HepG2 (cell line): ENCODE measurements at regions of chr9 and their contacts with region 1.

Region 1: GRCh38 chr9:107282753-107283625 is at the start of gene RAD23B:
- DNase-seq: peak; percentile 94
- ATAC-seq: peak; percentile 93
- H3K4me3 ChIP-seq: peak within 1 kb of the TSS; percentile 82 to 94 (median 87)
- H3K27ac ChIP-seq: peak within 1 kb of the TSS; percentile 98
- H3K4me1 ChIP-seq: peaks cover 40% of the 10 kb centered on the region
- H3K27me3 ChIP-seq: no peaks in the 10 kb centered on the region; a peak in 1 of 5 replicates
- CTCF ChIP-seq: 0 out of 2 replicates have a peak, but pooled peaks have one; percentile 9
- EP300 ChIP-seq: peak in 1 of 2 experiments; percentile 13; a peak in 2 of 4 replicates
- POLR2A ChIP-seq: peak; percentile 87 to 89
- RAD21 ChIP-seq: peak; percentile 62; the same call in 1 of the 2 replicates
- total RNA-seq, gene RAD23B: 133 and 159 TPM in 2 replicates

Region 2: DNA sequence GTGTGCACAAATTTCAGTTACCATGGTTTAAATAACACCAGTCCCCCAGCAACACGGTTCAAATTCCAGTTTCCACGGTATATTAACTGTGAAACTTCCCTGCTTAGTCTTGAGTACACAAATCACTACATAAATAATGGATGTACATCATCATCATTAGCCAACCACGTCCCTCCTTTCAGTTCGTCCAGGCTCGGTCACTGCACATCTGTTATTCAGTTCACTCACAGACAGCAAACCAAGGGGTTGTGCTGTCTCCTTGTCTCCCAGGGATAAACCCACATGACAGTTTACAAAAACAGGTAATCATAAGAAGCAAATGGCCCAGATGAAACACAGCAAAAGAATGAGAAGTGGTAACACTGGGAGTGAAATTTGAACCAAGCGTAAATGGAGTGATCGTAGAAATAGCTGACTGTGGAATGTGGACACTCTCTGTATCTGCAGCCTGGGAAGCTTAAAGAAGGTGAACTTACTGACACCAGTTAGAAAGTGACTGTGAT is 60.9 kb before region 1 on chr9:
- CTCF ChIA-PET with region 1: no interaction called
- POLR2A ChIA-PET with region 1: interaction called, 3 read pairs
- in situ Hi-C with region 1: no loop called
- intact Hi-C with region 1: loop called (anchors 2 kb)
- DNase-seq: peak; percentile 84
- ATAC-seq: peak; percentile 97
- H3K4me3 ChIP-seq: peak overlapping the region; percentile 42 to 51 (median 47); a peak in 5 of 6 replicates
- H3K27ac ChIP-seq: peak overlapping the region; percentile 54
- H3K4me1 ChIP-seq: peaks cover 31% of the 10 kb centered on the region
- H3K27me3 ChIP-seq: no peaks in the 10 kb centered on the region
- CTCF ChIP-seq: no peak
- EP300 ChIP-seq: no peak
- POLR2A ChIP-seq: peak in 1 of 2 experiments; percentile 51; a peak in 2 of 4 replicates
- RAD21 ChIP-seq: no peak

Region 3: DNA sequence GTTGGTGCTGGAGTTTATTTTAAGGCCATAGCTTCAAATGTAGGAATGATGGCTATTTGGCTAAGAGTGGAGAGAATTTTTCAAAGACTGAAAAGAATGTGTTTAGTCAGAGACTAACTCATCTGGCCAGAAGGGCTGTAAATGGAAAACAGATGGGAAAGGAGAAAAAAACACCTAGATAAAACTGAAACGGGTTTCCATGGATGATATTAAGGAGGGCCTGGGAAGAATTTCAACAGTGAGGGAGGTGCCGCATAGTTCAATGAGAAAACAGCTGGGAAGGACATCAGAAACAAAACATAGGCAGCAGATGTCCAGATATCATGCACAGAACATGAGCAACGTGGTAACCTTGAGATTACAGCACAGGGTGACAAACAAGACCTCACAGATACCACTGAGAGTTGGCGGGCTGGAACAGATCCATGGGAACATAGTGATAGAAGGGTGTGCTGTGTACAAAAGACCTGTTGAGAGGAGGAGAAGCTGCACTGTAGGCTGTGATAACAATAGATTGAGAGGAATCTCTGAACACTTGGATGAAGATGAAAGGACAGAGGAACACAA is 31.1 kb before region 1 on chr9:
- CTCF ChIA-PET with region 1: no interaction called
- POLR2A ChIA-PET with region 1: interaction called, 16 read pairs
- in situ Hi-C with region 1: no loop called
- intact Hi-C with region 1: loop called (anchors 2 kb)
- DNase-seq: peak; percentile 97
- ATAC-seq: peak; percentile 87
- H3K4me3 ChIP-seq: peak overlapping the region in 1 of 3 experiments; percentile 18; a peak in 1 of 6 replicates
- H3K27ac ChIP-seq: peak overlapping the region; percentile 50
- H3K4me1 ChIP-seq: peaks cover 76% of the 10 kb centered on the region
- H3K27me3 ChIP-seq: no peaks in the 10 kb centered on the region; a peak in 1 of 5 replicates
- CTCF ChIP-seq: no peak
- EP300 ChIP-seq: peak in 1 of 2 experiments; percentile 71; a peak in 1 of 4 replicates
- POLR2A ChIP-seq: no peak
- RAD21 ChIP-seq: no peak

Region 4: DNA sequence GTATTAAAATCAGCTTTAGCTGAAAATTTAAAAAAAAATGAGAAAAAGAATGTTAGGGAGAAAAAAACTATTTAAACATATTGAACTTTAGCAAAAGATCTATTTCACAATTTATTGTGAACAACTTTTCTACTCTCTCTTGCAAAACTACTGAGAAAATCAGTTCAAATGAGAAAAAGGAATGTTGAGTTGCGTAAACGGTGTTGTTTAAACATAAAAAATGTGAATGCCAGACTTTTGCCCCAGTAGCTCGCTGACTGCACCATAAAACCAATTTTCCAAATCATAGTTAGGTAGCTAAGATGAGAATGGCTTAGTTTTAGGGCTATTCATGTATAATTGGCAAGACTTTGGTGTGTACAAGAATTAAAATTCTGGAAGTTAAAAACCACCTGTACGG is 13.3 kb before region 1 on chr9:
- CTCF ChIA-PET with region 1: no interaction called
- POLR2A ChIA-PET with region 1: interaction called, 31 read pairs
- in situ Hi-C with region 1: no loop called
- intact Hi-C with region 1: no loop called
- DNase-seq: peak; percentile 87
- ATAC-seq: peak; percentile 69
- H3K4me3 ChIP-seq: peak overlapping the region; percentile 3 to 46 (median 36); a peak in 3 of 6 replicates
- H3K27ac ChIP-seq: peak overlapping the region; percentile 64
- H3K4me1 ChIP-seq: peaks cover 41% of the 10 kb centered on the region
- H3K27me3 ChIP-seq: no peaks in the 10 kb centered on the region
- CTCF ChIP-seq: no peak
- EP300 ChIP-seq: peak; percentile 36 to 83; a peak in 2 of 4 replicates
- POLR2A ChIP-seq: no peak
- RAD21 ChIP-seq: no peak

Region 5: GRCh38 chr9:107323836-107324585 is 41.0 kb after region 1 on chr9:
- CTCF ChIA-PET with region 1: no interaction called
- POLR2A ChIA-PET with region 1: interaction called, 5 read pairs
- in situ Hi-C with region 1: no loop called
- intact Hi-C with region 1: loop called (anchors 5 kb)
- DNase-seq: no peak
- ATAC-seq: no peak
- H3K4me3 ChIP-seq: no peak overlapping the region
- H3K27ac ChIP-seq: no peak overlapping the region
- H3K4me1 ChIP-seq: peaks cover 20% of the 10 kb centered on the region
- H3K27me3 ChIP-seq: no peaks in the 10 kb centered on the region
- CTCF ChIP-seq: no peak
- EP300 ChIP-seq: no peak
- POLR2A ChIP-seq: no peak
- RAD21 ChIP-seq: no peak

Region 6: DNA sequence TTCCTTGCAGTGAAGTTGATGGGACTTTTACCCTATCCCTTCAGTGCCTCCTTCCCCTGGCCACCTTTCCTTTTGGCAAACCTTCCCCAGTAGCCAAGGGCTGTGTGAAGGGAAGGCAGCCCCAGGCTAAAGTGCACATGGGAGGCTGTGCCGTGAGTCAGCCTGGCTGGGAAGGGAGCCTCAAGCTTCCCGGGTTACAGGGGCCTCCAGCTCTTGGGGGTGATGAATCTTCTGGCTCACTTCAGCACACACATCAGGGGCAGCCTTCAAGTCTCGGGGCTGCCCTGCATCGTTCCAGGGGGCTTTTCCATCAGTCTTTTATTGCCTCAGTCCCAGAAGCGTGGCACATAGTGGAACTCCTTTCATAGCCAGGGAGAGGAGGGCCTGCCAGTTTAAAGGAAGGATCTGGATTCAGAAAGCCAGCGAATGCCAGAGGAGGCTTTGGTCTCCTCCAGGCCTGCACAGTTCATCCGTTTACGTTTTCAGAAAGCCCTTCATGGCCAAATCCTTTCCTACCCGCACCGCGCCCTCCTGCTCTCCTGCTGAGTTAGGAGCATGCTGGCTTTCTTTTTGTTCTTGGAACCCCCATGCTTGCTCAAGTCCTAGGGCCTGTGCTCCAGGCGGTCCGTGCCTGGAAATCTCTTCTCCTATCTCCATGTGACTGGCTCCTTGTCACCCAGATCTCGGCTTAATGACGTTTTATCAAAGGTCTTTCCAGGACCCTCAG is 341.4 kb after region 1 on chr9:
- CTCF ChIA-PET with region 1: no interaction called
- POLR2A ChIA-PET with region 1: no interaction called
- in situ Hi-C with region 1: no loop called
- intact Hi-C with region 1: no loop called
- DNase-seq: no peak
- ATAC-seq: no peak
- H3K4me3 ChIP-seq: no peak overlapping the region
- H3K27ac ChIP-seq: no peak overlapping the region
- H3K4me1 ChIP-seq: no peaks in the 10 kb centered on the region
- H3K27me3 ChIP-seq: peaks cover 0 to 3% of the 10 kb centered on the region in 2 experiments; a peak in 3 of 5 replicates
- CTCF ChIP-seq: no peak
- EP300 ChIP-seq: no peak
- POLR2A ChIP-seq: no peak
- RAD21 ChIP-seq: no peak